H1 (cell line): ENCODE measurements at regions of chr15 and their contacts with region 1.

Region 1: DNA sequence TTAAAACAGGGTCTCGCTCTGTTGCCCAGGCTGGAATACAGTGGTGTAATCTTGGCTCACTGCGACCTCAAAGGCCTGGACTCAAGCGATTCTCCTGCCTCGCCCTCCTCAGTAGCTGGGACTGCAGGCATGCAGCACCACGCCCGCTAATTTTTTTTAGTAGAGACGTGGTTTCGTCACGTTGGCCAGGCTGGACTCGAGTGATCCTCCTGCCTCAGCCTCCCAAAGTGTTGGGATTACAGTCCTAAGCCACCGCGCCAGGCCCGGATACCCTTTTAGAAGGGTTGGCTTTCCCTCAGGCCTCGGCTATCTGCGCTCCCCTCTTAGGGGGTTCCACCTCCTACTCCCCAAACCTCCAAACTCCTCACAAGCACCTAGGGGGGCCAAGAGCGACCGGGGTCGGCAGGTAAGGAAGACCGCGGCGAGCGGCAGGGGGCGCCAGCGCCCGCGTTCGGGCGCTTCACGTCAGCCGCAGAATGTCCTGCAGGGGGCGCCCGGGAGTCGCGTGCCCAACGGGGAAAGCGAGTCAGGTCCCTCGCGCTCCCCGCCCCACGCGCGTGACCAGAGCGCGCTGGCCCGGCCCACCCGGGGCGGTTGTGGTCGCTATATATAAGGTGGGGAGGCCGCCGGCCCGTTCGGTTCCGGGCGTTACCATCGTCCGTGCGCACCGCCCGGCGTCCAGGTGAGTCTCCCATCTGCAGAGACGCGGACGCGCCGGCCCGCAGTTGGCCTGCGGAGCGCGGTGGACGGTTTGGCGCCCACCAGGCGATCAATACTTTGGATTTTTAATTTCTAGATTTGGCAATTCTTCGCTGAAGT is 51.8 kb upstream of the GATM start:
- DNase-seq: peak; percentile 21 to 98
- H3K4me3 ChIP-seq: peak overlapping the region; percentile 21 to 63 (median 42)
- H3K27ac ChIP-seq: no peak overlapping the region
- H3K4me1 ChIP-seq: no peaks in the 10 kb centered on the region
- H3K27me3 ChIP-seq: peaks cover 3 to 22% (median 13%) of the 10 kb centered on the region in 4 experiments; a peak in 6 of 7 replicates
- CTCF ChIP-seq: peak; percentile 93 to 100 (median 93)
- EP300 ChIP-seq: no peak
- POLR2A ChIP-seq: no peak
- RAD21 ChIP-seq: peak; percentile 84 to 89

Region 2: DNA sequence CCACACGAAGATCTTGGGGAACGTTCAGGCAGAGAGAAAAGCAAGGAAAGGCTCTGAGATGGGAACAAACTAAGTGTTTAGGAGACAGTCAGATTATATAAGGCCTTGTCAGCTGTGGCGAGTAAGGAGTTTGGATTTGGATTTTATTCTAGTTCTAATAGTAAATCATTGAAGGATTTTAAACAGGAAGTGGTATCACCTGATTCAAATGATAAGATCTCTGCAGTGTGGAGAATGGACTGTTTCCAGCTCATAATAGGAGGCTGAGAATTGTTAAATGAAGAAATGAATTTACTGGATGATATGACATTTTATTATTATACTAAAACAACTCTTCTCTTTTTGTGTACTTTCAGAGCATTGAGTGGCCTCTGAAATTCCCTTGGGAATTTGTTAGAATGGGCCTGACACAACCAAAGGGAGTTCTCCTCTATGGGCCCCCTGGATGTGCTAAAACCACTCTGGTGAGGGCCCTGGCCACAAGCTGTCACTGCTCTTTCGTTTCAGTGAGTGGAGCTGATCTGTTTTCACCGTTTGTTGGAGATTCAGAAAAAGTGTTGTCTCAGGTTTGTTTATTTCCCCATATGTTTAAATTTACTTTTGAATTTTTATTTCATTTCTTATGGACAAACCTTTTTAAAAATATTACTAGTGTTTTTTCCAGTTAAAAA is 15.8 kb before region 1 on chr15:
- CTCF ChIA-PET with region 1: interaction called, 11 read pairs
- POLR2A ChIA-PET with region 1: interaction called, 4 read pairs
- DNase-seq: no peak
- H3K4me3 ChIP-seq: no peak overlapping the region
- H3K27ac ChIP-seq: no peak overlapping the region
- H3K4me1 ChIP-seq: no peaks in the 10 kb centered on the region
- H3K27me3 ChIP-seq: no peaks in the 10 kb centered on the region
- CTCF ChIP-seq: no peak
- EP300 ChIP-seq: no peak
- POLR2A ChIP-seq: no peak
- RAD21 ChIP-seq: no peak

Region 3: DNA sequence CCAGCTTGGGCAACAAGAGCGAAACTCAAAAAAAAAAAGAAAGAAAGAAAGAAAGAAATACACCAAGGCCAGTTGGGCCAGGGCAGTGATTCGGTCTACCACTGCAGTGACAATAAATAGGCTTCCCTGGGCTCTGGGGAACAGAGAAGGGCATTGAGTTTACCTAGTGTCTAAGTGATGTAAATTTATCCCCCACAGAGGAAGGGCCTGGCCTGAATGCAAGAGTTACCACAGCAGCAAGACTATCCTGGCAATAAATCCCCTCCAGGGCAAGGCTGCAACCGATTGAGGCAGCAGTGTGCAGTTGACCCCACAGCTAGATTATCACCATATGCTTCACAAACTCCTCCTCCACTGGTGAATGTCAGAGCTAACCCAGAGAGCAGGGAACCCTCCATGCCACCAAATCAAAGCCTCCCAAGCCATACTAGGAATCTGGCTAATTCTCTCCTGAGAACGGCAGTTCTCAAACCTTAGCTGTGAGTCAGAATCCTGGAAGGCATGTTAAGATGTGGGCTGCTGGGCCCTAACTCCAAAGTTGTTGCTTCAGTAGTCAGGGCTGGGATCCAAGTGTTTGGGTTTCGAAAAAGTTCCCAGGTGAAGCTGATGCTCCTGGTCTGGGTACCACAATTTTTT is 12.4 kb after region 1 on chr15:
- CTCF ChIA-PET with region 1: interaction called, 17 read pairs
- POLR2A ChIA-PET with region 1: no interaction called
- DNase-seq: no peak
- H3K4me3 ChIP-seq: no peak overlapping the region
- H3K27ac ChIP-seq: no peak overlapping the region
- H3K4me1 ChIP-seq: peaks cover 0 to 3% (median 3%) of the 10 kb centered on the region in 4 experiments; a peak in 3 of 7 replicates
- H3K27me3 ChIP-seq: peaks cover 0 to 5% (median 0%) of the 10 kb centered on the region in 4 experiments; a peak in 2 of 7 replicates
- CTCF ChIP-seq: no peak
- EP300 ChIP-seq: no peak
- POLR2A ChIP-seq: no peak
- RAD21 ChIP-seq: no peak

Region 4: DNA sequence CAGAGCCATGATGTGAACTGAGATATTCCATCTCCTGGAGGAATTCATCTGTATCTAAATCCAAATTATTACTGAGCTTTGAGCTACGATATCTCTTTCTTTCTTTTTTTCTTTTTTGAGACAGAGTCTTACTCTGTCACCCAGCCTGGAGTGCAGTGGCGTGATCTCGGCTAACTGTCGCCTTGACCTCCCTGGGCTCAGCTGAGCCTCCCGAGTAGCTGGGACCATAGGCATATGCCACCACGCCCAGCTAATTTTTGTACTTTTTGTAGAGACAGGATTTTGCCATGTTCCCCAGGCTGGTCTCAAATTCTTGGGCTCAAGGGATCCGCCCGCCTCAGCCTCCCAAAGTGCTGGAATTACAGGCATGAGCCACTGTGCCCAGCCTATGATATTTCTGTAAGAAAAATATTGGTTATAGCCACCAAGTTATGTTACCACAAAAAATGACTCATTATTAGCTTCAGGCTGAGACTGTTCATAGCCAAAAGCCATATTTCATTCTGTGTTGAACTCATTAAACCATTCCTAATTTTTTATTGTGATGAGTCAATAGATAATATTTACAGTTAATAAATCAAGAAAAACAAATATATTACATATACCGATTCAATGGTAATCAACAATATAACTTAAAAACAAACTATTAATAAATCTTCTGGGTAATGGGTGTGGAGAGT is 119.5 kb after region 1 on chr15:
- CTCF ChIA-PET with region 1: no interaction called
- POLR2A ChIA-PET with region 1: no interaction called
- DNase-seq: no peak
- H3K4me3 ChIP-seq: no peak overlapping the region
- H3K27ac ChIP-seq: no peak overlapping the region
- H3K4me1 ChIP-seq: no peaks in the 10 kb centered on the region
- H3K27me3 ChIP-seq: no peaks in the 10 kb centered on the region
- CTCF ChIP-seq: no peak
- EP300 ChIP-seq: no peak
- POLR2A ChIP-seq: no peak
- RAD21 ChIP-seq: no peak